Head of caudate nucleus (tissue), 42 donors: ENCODE measurements at regions of chr14 and their contacts with region 1.

Region 1: DNA sequence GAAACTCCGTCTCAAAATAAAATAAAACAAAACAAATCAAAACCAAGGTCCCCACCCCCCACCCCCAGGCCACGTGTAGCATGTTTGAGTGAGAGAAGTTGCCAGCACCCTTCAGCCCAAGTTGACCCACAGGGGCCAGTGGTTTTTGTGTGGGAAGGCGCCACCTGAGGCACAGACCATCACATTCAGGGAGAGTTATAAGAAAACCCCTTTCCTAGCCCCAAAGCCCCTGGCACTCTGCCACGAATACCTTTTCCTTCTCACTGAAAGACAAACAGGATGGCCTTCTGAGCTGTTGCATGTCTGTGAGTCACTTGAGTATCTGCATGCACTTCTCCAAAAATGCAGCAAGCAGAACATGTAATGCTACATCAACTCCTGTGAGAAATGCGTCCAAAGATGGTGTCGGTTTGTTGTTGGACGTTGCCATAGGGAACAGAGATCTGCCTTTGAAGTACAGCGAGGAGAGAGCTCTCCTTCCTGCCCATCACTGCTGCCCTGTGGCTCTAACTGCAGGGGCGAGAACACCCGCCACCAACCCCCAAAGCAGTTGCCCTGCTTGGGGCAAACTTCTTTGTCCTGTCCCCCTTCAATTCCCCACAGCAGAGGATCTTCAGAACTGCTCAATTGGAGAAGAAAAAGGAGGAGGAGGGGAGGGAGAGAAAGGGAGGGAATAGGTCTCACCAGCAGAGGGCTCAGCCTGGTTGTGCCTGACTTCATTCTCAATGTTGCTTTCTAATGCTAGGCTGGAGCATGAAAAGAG is 2.7 kb upstream of the TRAF3 start:
- DNase-seq: peak in 41 of 42 donors; percentile 40 to 90 (median 73)

Region 2: GRCh38 chr14:102591889-102592763 is 182.4 kb before region 1 on chr14 and contains the start of gene RCOR1:
- intact Hi-C with region 1: loop called (anchors 5 kb)
- DNase-seq: peak; percentile 94 to 100 (median 99)

Region 3: DNA sequence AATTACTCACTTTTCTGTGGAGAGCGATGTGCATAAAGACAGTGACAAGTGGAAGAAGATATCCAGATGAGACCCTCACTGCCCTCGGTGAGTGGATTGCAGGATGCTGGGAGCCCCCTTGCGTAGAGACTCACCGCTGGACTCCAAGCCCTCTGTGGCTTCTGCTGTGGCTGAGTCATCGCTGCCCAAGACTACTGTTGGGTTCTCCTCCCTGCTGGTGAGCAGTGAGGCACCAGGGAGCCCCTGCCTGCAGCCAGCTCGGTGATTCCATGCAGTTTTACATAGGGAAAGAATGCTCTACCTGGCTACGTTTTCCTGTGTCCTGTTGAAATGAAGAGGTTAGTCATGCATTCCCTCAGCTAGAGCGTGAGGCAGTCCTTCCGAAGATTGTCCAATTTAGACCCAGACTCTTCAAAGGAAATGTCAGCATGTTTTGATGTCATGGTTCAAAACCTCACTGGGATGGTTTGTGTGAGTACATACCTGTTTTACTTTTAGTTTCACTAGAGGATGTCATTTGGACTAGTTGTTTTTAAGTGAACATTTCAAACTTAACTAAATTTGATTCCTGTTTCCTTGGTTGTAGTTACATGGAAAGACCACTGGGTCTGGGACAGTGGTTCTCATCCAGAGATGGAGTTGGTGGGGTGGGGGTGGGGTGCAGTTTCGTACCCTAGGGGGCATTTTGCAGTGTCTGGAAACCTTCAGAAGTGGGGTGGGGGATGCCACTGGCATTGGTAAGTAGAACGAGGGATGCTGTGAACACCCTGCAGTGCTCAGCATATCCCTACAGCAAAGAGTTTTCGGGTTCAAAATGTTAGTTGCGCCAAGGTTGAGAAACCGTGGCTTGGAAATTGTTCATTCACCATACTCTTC is 31.0 kb after region 1 on chr14:
- intact Hi-C with region 1: no loop called
- DNase-seq: no peak

Region 4: DNA sequence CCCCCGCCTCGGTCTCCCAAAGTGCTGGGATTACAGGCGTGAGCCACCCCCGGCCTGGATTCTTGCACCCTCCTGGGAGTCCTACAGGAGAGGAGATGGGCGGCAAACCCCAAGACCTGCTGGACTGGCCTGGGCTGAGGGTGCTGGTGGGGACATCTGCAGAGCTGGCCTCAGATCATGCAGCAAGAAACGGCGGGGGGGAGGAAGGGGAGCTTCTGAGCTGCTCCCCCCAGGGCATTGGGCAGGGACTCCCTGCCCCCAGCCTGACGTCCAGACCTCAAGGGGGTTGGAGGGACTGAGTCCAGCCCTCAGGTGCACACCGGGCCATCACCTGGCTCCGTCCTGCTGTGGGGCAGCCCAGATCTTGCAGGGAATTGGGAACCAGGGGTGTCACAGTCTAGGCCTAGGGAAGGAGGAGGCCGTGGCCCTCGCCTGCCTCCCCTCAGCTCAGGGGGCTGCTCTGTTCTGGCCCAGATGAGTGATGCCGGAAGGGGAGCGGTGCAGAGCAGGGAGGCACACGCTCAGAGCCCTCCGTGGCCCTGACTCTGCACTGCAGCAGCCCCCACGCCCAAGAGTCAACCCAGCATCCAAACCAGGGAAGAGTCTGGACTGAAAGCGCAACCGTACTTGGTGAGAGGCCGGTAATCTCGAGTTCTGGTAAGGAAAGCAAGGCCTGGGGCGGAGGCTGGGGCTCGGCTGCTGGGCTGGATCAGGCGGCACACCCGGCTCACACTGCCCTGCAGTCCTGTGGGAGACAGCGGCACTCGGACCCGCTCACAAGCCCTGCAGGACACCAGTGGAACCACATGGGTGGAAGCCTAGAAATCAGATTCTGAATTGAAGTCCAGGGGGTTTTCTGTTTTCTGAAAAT is 139.0 kb after region 1 on chr14:
- intact Hi-C with region 1: no loop called
- DNase-seq: no peak

Region 5: DNA sequence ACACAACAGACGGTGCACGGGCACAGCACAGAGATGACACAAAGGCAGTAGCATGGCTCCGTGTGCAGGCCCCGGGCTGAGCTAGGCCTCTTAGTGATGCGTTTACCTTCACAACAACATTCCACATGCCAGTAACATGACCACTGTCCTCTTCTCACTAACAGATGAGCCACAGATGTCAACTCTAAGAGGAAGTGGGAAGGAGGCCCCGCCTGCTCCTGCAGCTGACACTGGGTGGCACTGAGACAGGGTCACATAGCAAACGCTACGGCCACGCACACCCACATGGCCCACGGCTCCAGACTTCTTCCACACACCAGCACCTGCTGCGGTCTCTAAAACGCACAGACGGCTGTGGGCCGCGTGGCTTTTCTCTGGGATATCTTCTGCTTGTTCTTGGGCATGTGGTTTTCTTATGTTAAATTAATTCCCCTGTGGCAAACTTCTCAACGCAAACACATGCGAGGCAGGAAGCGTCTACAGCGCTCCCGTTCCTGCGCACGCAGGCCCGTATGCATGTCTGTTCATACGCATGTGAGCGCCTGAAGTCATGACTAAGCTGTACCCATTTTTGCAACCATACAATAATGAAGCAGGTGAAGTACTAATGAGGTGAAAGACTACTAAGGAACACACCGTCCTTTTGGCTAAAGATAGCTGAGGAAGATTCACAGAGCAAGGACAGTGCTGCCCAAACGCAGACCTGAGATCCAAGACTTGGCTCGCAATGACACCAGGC is 174.7 kb after region 1 on chr14:
- intact Hi-C with region 1: loop called (anchors 10 kb)
- DNase-seq: peak in 19 of 42 donors; percentile 23 to 71 (median 45)

Region 6: GRCh38 chr14:103057365-103058096 is 283.0 kb after region 1 on chr14 and contains the start of gene CDC42BPB:
- intact Hi-C with region 1: loop called (anchors 10 kb)
- DNase-seq: peak; percentile 60 to 95 (median 89)